ENCODE measurements at regions of chr3 and their contacts with region 1.

Region 1: DNA sequence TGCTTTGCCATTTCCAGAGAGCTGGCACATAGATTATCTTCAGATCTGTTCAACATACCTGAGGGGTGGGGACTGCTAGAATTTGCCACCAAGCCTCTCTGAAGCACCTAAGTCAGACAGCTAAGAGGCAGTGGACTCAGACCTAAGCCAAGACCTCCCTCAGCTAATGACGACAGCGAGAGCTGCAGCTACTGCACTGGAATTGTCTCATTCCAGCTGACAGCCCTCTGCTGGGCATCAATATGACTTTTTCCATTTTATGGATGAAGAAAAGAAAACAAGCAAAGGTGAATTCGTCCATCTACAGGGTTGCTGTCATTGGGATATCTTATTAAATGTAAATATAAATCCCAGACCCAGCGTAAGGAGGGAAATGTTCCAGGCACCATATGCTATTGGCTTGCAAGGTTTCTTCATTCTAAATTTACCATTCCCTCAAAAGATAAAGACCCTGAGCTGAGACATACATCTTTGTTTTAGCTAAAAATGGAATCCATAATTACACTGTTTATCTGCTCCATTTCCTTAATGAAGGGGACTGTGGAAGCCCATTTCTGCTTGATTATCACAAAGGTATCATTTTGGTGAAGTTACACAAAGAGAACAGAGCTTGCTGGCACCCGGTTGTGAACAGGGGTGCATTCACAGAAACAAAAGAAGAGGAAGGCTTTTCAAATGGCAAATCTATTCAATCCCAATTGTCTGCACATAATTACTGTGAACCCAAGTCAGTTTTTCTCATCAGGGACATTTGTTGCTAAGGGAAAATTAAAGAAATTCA is 85.5 kb upstream of the LRTM1 start:
- DNase-seq: peak in 1 of 2 experiments; percentile 21
- H3K4me3 ChIP-seq: no peak overlapping the region
- H3K4me3 Mint-ChIP-seq: no peak overlapping the region
- H3K27ac Mint-ChIP-seq: no peak overlapping the region
- H3K4me1 ChIP-seq: no peaks in the 10 kb centered on the region
- H3K4me1 Mint-ChIP-seq: no peaks in the 10 kb centered on the region
- H3K27me3 ChIP-seq: no peaks in the 10 kb centered on the region
- H3K27me3 Mint-ChIP-seq: peaks cover 9% of the 10 kb centered on the region
- CTCF ChIP-seq: peak in 1 of 2 experiments; percentile 29

Region 2: DNA sequence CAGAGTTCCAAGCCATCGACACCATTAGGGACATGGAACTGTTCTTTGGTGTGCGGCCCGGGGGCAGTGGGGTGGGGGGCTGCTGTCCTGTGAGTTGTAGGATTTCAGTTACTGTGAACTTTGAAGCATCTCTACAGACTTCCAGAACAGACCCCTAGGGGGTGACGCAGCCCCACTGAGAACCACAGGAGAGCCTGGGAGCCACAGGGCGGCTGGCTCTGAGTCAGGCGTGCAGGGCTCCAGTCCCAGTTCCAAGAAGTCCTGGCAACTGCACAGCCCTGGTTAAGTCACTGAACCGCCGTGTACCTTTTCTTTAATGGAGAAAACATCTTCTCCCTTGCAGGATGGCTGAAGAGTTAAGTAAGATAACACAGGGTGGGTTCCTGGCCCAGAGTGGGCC is 61.9 kb before region 1 on chr3:
- CTCF ChIA-PET with region 1: no interaction called
- POLR2A ChIA-PET with region 1: no interaction called
- intact Hi-C with region 1: loop called (anchors 1 kb)
- DNase-seq: peak; percentile 46 to 54
- H3K4me3 ChIP-seq: no peak overlapping the region
- H3K4me3 Mint-ChIP-seq: no peak overlapping the region
- H3K27ac Mint-ChIP-seq: no peak overlapping the region
- H3K4me1 ChIP-seq: no peaks in the 10 kb centered on the region
- H3K4me1 Mint-ChIP-seq: no peaks in the 10 kb centered on the region
- H3K27me3 ChIP-seq: no peaks in the 10 kb centered on the region
- H3K27me3 Mint-ChIP-seq: peaks cover 3% of the 10 kb centered on the region
- CTCF ChIP-seq: peak; percentile 49 to 72